HCT116 (cell line): ENCODE measurements at regions of chr3 and their contacts with region 1.

Region 1: GRCh38 chr3:39499651-39500240 is 32.3 kb downstream of the MOBP start:
- DNase-seq: no peak
- ATAC-seq: no peak
- H3K4me3 ChIP-seq: no peak overlapping the region
- H3K27ac ChIP-seq: no peak overlapping the region
- H3K4me1 ChIP-seq: peaks cover 0 to 11% of the 10 kb centered on the region in 2 experiments; a peak in 1 of 4 replicates
- H3K27me3 ChIP-seq: peaks cover 23% of the 10 kb centered on the region
- CTCF ChIP-seq: no peak
- POLR2A ChIP-seq: no peak
- RAD21 ChIP-seq: no peak

Region 2: GRCh38 chr3:39189959-39190269 is 309.8 kb before region 1 on chr3:
- CTCF ChIA-PET with region 1: no interaction called
- POLR2A ChIA-PET with region 1: no interaction called
- RAD21 ChIA-PET with region 1: no interaction called
- intact Hi-C with region 1: loop called (anchors 5 kb)
- DNase-seq: peak; percentile 53
- ATAC-seq: peak; percentile 82
- H3K4me3 ChIP-seq: no peak overlapping the region
- H3K27ac ChIP-seq: no peak overlapping the region
- H3K4me1 ChIP-seq: peaks cover 0 to 21% of the 10 kb centered on the region in 2 experiments; a peak in 1 of 4 replicates
- H3K27me3 ChIP-seq: no peaks in the 10 kb centered on the region
- CTCF ChIP-seq: peak; percentile 72 to 84 (median 72); a peak in 5 of 6 replicates
- POLR2A ChIP-seq: no peak
- RAD21 ChIP-seq: peak; percentile 87

Region 3: DNA sequence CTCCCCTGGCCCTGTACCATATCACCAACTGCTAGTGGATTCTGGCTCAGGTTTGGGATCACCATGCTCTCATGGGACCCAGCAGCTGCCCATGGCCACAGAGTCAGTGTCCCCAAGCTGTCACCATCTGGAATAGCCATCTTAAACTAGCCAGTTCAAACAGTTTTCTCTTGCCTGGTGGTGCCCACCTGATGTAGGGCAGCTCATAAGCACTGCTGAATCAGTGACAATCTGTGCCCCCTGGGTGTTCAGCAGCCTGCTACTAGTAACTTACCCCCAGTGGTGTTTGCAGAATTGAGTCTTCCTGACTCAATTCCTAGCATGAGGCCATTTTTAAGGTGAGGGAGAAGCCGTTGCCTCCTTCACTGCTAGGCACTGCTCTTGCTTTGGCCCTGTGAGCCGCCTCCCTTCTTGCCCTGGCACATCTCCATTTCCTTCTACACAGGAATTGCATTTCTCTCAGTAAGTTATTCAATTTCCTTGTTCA is 85.3 kb before region 1 on chr3:
- CTCF ChIA-PET with region 1: interaction called, 37 read pairs
- POLR2A ChIA-PET with region 1: no interaction called
- RAD21 ChIA-PET with region 1: interaction called in 1 of 2 experiments, 3 read pairs
- intact Hi-C with region 1: loop called (anchors 1 kb)
- DNase-seq: no peak
- ATAC-seq: peak; percentile 31
- H3K4me3 ChIP-seq: no peak overlapping the region
- H3K27ac ChIP-seq: peak overlapping the region; percentile 54
- H3K4me1 ChIP-seq: peaks cover 0 to 26% of the 10 kb centered on the region in 2 experiments; a peak in 2 of 4 replicates
- H3K27me3 ChIP-seq: no peaks in the 10 kb centered on the region
- CTCF ChIP-seq: no peak
- POLR2A ChIP-seq: no peak
- RAD21 ChIP-seq: no peak

Region 4: DNA sequence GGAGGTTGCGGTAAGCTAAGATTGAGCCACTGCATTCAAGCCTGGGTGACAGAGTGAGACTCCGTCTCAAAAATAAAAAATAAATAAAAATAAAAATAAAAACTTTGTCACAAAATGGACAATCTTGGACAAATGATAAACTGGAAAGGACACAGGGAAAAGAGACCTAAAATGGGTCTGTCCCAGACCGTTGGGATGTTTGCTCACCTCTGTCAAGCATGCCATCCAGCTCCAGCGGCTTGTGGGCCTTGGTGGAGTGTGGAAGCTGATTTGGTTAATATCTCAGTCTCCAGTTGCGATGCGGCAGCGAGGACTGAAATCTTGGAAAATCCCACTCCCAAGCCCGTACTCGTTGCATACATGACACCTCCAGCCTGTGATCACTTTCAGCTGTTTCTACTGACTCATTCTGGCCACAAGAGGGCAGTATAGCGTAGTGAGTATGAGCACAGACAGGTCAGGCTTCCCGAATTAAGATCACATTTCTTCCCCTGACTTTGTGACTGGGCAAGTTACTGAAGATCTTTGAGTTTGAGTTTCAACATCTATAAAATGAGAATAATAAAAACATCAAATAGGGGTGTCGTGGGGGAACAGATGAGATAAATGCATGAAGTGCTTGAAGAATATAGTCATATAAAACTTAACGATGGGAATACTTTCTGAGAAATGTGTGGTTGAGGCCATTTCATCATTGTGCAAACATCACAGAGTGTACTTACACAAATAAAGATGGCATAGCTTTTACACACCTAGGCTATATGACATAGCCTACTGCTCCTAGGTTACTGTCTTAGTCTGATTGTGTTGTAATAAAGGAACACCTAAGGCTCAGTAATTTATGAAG is 51.9 kb before region 1 on chr3:
- CTCF ChIA-PET with region 1: interaction called, 35 read pairs
- POLR2A ChIA-PET with region 1: no interaction called
- RAD21 ChIA-PET with region 1: interaction called in 1 of 2 experiments, 5 read pairs
- intact Hi-C with region 1: loop called (anchors 1 kb)
- DNase-seq: peak; percentile 81
- ATAC-seq: peak; percentile 98
- H3K4me3 ChIP-seq: no peak overlapping the region
- H3K27ac ChIP-seq: no peak overlapping the region
- H3K4me1 ChIP-seq: 0 out of 4 replicates have a peak, but pooled peaks cover 0 to 2% of the 10 kb centered on the region in 2 experiments
- H3K27me3 ChIP-seq: no peaks in the 10 kb centered on the region
- CTCF ChIP-seq: peak; percentile 80 to 91 (median 86)
- POLR2A ChIP-seq: no peak
- RAD21 ChIP-seq: peak; percentile 83

Region 5: GRCh38 chr3:39478226-39478625 is 21.5 kb before region 1 on chr3:
- CTCF ChIA-PET with region 1: interaction called, 12 read pairs
- POLR2A ChIA-PET with region 1: no interaction called
- RAD21 ChIA-PET with region 1: no interaction called
- intact Hi-C with region 1: no loop called
- DNase-seq: no peak
- ATAC-seq: no peak
- H3K4me3 ChIP-seq: no peak overlapping the region
- H3K27ac ChIP-seq: no peak overlapping the region
- H3K4me1 ChIP-seq: no peaks in the 10 kb centered on the region
- H3K27me3 ChIP-seq: no peaks in the 10 kb centered on the region
- CTCF ChIP-seq: no peak
- POLR2A ChIP-seq: no peak
- RAD21 ChIP-seq: no peak

Region 6: DNA sequence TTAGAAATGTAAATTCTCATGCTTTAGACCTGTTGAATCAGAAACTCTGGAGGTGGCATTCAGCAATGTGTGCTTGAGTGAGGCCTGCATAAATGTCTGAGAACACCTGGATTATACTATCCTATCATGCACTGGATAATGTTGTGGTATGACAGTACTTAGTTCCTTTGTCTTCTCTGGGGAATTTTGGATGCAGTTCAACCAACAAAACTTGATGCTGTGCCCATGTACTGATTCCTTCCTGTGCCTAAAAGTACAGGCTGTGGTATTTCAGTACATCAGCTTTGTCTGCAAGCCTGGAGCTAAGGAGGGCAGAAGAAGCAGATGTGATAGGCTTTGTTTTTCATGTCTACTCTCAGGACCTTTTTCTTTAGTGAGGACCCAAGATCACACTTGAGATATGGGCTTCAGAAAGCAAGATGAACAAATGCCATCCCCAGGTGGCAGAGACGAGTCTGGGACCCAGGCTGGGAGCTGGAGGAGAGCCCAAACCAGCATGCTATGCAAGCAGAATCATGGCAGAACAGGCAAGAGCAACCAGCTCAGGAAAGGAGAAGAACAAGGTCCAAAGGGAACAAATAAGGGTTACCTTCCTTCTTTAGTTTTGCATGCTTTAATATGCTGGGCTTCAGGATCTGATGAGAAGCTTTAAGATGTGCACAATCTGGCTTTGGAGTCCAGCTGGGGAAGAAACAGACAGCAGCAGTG is 434.4 kb after region 1 on chr3:
- CTCF ChIA-PET with region 1: no interaction called
- POLR2A ChIA-PET with region 1: no interaction called
- RAD21 ChIA-PET with region 1: no interaction called
- intact Hi-C with region 1: no loop called
- DNase-seq: no peak
- ATAC-seq: no peak
- H3K4me3 ChIP-seq: no peak overlapping the region
- H3K27ac ChIP-seq: no peak overlapping the region
- H3K4me1 ChIP-seq: no peaks in the 10 kb centered on the region
- H3K27me3 ChIP-seq: no peaks in the 10 kb centered on the region; the same call in 1 of the 2 replicates
- CTCF ChIP-seq: no peak
- POLR2A ChIP-seq: no peak
- RAD21 ChIP-seq: no peak